T-cell (primary cell): ENCODE measurements at regions of chr1 and their contacts with region 1.

Region 1: DNA sequence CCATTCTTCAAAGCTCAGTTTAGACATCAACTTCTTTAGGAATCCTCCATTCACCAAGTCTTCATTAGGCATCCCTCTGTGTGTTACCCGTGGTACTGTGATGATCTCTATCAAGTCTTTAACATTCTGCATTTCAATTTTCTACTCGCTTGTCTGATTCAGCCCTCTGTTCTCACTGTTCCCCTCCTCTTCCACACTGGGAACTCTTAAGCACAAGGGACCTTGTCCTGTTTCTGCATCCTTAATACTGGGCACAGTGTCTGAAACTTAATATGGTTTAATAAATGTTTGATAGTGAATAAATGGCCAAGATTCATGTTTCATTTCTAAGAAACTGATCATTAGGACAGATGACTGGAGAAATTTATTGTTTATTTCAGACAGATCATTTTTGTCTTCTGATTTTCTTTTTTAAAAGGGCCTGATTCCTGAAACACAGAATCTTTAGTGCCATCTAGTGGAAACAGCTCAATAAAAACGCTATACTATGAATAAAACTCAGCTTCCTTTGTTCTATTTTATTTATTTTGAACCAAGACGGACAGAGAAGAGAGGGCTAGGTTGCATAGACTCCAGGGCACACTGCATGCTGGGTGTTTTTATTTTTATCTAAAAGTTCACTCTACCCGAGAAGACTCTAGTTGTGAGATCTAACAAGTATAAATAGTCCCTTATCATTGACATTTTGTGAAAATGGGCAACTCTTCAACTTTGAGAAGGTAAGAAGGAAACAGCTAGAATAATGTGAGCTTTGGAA is 7.0 kb upstream of the TRIM45 start:
- DNase-seq: peak in 1 of 35 experiments; percentile 52
- ATAC-seq: peak in 2 of 4 experiments; percentile 32 to 57
- H3K4me3 ChIP-seq: no peak overlapping the region
- H3K4me3 Mint-ChIP-seq: no peak overlapping the region
- H3K27ac ChIP-seq: no peak overlapping the region
- H3K27ac Mint-ChIP-seq: no peak overlapping the region
- H3K4me1 ChIP-seq: no peaks in the 10 kb centered on the region
- H3K4me1 Mint-ChIP-seq: peaks cover 0 to 2% (median 2%) of the 10 kb centered on the region in 3 donors
- H3K27me3 ChIP-seq: peaks cover 0 to 8% of the 10 kb centered on the region in 2 experiments
- H3K27me3 Mint-ChIP-seq: peaks cover 0 to 8% of the 10 kb centered on the region in 2 donors

Region 2: GRCh38 chr1:116817582-116818064 is 310.9 kb before region 1 on chr1:
- CTCF ChIA-PET with region 1: no interaction called
- POLR2A ChIA-PET with region 1: no interaction called
- DNase-seq: peak; percentile 39 to 86 (median 60)
- ATAC-seq: peak; percentile 71 to 77 (median 74)
- H3K4me3 ChIP-seq: no peak overlapping the region
- H3K4me3 Mint-ChIP-seq: peak overlapping the region in 2 of 3 donors; percentile 34 to 70
- H3K27ac ChIP-seq: peak overlapping the region; percentile 61
- H3K27ac Mint-ChIP-seq: peak overlapping the region; percentile 64 to 80
- H3K4me1 ChIP-seq: peaks cover 23 to 27% of the 10 kb centered on the region in 2 experiments
- H3K4me1 Mint-ChIP-seq: peaks cover 28 to 33% (median 32%) of the 10 kb centered on the region in 3 donors
- H3K27me3 ChIP-seq: no peaks in the 10 kb centered on the region
- H3K27me3 Mint-ChIP-seq: no peaks in the 10 kb centered on the region

Region 3: GRCh38 chr1:117093870-117094621 is 34.5 kb before region 1 on chr1:
- CTCF ChIA-PET with region 1: interaction called in 1 of 2 experiments, 19 read pairs
- POLR2A ChIA-PET with region 1: no interaction called
- DNase-seq: peak in 19 of 35 experiments; percentile 2 to 43 (median 9)
- ATAC-seq: peak; percentile 79 to 95 (median 86)
- H3K4me3 ChIP-seq: no peak overlapping the region
- H3K4me3 Mint-ChIP-seq: no peak overlapping the region
- H3K27ac ChIP-seq: no peak overlapping the region
- H3K27ac Mint-ChIP-seq: peak overlapping the region in 1 of 2 donors; percentile 12
- H3K4me1 ChIP-seq: no peaks in the 10 kb centered on the region
- H3K4me1 Mint-ChIP-seq: peaks cover 0 to 11% (median 9%) of the 10 kb centered on the region in 3 donors
- H3K27me3 ChIP-seq: no peaks in the 10 kb centered on the region
- H3K27me3 Mint-ChIP-seq: no peaks in the 10 kb centered on the region